ENCODE measurements at regions of chr2 and their contacts with region 1.

Region 1: DNA sequence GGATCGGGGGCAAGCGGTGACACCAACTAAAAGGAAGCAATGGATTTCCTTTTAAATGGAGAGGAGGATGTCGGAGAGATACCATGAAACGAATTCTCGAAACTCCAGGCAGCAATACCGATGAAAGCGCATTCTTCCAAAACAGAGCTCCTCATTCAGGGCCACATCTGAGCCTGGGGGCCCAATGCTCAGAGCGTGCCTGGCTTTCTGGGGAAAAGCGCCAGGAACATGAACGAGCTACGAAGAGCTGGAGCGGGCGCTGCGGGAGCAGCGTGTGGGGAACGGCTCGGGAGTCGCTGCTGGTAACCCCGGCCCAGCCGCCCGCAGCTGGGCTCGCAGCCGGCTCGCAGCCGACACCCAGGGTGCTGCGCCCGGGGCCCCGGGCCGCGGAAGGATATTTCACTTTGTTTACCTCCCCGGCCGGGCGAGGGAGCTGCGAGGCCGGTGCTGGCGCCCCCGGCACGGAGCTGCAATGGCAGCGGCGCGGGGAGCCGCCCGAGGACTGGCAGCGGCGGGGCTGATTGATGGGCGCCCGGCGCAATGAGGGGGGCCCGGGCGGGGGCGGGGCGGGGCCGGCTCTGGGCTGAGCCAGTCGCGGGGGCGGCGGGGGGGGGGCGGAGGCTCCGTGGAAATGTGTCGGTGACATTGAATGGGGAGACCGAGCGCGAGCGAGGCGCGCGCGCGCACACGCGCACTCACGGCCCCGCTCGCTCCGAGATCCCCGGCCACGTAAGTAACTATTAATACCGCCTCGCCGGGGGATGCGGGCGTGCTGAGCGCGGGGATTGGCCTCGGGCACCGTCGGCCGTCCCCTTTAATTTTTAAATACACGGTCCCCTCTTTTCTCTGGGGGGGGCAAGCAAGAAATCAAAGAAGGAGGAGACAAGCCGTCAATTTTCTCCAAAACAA is at the start of gene TRIB2:
- DNase-seq: peak; percentile 87
- H3K27ac ChIP-seq: peak within 1 kb of the TSS; percentile 96
- CTCF ChIP-seq: peak; percentile 39

Region 2: GRCh38 chr2:11829947-11830707 is 886.4 kb before region 1 on chr2:
- CTCF ChIA-PET with region 1: interaction called, 17 read pairs
- POLR2A ChIA-PET with region 1: no interaction called
- DNase-seq: peak; percentile 97
- H3K27ac ChIP-seq: peak overlapping the region; percentile 98
- CTCF ChIP-seq: peak; percentile 69

Region 3: DNA sequence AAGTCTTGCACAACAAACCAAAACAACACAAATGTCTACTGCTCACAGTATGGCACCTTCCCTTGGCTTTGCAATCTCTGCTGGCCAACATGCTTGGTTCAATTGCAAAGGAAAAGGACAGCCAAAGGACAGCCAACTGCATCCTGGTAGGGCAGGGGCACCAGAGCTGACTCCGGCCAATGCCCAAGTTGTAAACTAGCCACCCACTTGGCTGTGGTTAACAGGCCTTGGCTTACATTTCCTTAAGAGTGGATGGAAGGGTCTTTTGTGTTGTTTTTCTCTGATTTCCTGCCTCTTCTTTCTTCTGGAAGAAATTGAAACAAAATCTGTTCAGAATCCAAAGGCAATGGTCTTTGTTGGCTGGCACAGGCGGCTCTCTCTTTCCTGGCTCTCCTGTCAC is 118.9 kb before region 1 on chr2:
- CTCF ChIA-PET with region 1: no interaction called
- POLR2A ChIA-PET with region 1: no interaction called
- DNase-seq: no peak
- H3K27ac ChIP-seq: no peak overlapping the region
- CTCF ChIP-seq: no peak

Region 4: DNA sequence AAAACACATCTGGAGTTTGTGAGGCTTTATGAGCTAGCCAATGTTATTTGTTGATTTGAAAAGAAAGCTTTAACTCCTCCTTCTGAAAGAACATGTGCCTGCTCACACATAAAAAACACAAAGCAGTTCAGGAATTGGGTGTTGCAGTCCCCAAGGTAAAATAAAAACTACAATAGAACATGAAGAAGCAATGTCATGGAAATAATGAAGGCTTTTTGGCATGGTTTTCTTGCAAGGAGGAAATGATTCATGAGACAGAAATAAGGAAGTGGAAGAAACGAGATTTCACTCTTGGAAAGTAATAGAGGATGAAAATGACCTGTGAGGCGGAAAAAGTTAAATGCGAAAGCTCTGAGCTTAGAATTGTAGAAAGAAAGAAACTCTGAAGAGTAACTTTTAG is 81.3 kb after region 1 on chr2:
- CTCF ChIA-PET with region 1: no interaction called
- POLR2A ChIA-PET with region 1: no interaction called
- DNase-seq: no peak
- H3K27ac ChIP-seq: no peak overlapping the region
- CTCF ChIP-seq: no peak

Region 5: GRCh38 chr2:12931186-12931844 is 214.8 kb after region 1 on chr2:
- CTCF ChIA-PET with region 1: interaction called, 31 read pairs
- POLR2A ChIA-PET with region 1: no interaction called
- DNase-seq: peak; percentile 55
- H3K27ac ChIP-seq: no peak overlapping the region
- CTCF ChIP-seq: peak; percentile 83

Region 6: GRCh38 chr2:13006829-13007717 is 290.5 kb after region 1 on chr2:
- CTCF ChIA-PET with region 1: interaction called, 32 read pairs
- POLR2A ChIA-PET with region 1: no interaction called
- DNase-seq: peak; percentile 63
- H3K27ac ChIP-seq: no peak overlapping the region
- CTCF ChIP-seq: peak; percentile 89

Measured in RWPE1 (cell line).